A549 (cell line): ENCODE measurements at regions of chr17 and their contacts with region 1.

Region 1: GRCh38 chr17:29777663-29778062 is 152.4 kb downstream of the SSH2 start:
- DNase-seq: no peak
- ATAC-seq: no peak
- H3K4me3 ChIP-seq: no peak overlapping the region
- H3K27ac ChIP-seq: no peak overlapping the region
- H3K4me1 ChIP-seq: no peaks in the 10 kb centered on the region; the same call in 2 of the 3 replicates
- CTCF ChIP-seq: no peak
- EP300 ChIP-seq: no peak
- POLR2A ChIP-seq: no peak
- RAD21 ChIP-seq: no peak

Region 2: DNA sequence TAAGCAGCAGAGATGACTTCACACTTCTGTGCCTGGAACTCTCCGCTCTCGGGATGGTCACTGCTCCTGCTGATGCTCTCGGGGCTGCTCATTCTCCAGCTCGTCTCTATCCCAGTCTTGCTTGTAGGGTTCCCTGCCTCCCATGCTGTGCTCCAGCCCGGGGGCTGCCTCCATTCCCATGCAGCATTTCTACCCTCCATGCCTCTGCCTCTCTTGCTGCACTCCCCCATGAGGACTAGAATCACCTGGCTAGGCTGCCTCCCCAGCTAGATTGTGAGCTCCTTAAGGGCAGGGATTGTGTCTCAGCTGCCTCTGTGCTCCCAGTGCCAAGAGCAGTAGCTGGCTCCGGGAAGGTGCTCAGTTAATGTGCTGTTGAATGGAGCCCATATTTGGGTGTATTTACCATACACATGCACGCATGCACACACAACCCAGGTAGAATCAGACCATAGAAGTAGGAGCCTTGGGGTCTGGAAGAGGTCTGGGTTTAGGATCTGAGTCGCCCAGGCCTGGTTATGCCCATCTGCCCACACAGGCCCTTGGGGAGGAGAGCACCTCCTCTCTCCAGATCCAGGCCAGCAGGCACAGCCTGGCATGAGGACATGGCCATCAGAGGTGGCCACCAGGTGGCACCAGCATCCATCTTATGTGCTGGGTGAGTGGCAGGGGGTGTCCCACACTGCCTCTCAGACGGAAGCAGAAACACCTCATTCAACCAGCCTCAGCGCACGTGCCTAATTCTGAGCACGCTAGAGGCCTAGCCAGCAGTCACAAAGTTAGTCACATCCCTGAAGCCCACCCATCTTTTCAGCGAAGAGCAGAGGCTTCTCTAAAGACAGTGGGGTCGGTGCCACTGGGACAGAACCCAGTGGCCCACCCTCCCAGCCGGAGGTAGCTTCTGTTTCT is 197.5 kb before region 1 on chr17:
- CTCF ChIA-PET with region 1: interaction called, 36 read pairs
- POLR2A ChIA-PET with region 1: no interaction called
- DNase-seq: peak; percentile 91 to 99
- ATAC-seq: peak; percentile 87 to 96
- H3K4me3 ChIP-seq: no peak overlapping the region
- H3K27ac ChIP-seq: peak overlapping the region; percentile 41 to 72; a peak in 5 of 6 replicates
- H3K4me1 ChIP-seq: peaks cover 26% of the 10 kb centered on the region
- CTCF ChIP-seq: peak; percentile 98
- EP300 ChIP-seq: no peak
- POLR2A ChIP-seq: no peak
- RAD21 ChIP-seq: peak; percentile 95

Region 3: GRCh38 chr17:29617125-29617480 is 160.6 kb before region 1 on chr17:
- CTCF ChIA-PET with region 1: interaction called, 111 read pairs
- POLR2A ChIA-PET with region 1: no interaction called
- DNase-seq: peak; percentile 84 to 88
- ATAC-seq: peak; percentile 19 to 67; a peak in 3 of 6 replicates
- H3K4me3 ChIP-seq: peak overlapping the region; percentile 23; the same call in 1 of the 3 replicates
- H3K27ac ChIP-seq: peak overlapping the region in 1 of 2 experiments; percentile 82; a peak in 4 of 6 replicates
- H3K4me1 ChIP-seq: peaks cover 56% of the 10 kb centered on the region
- CTCF ChIP-seq: peak; percentile 58
- EP300 ChIP-seq: no peak
- POLR2A ChIP-seq: peak; percentile 21; the same call in 1 of the 2 replicates
- RAD21 ChIP-seq: peak in 1 of 2 experiments; percentile 23; a peak in 1 of 5 replicates

Region 4: DNA sequence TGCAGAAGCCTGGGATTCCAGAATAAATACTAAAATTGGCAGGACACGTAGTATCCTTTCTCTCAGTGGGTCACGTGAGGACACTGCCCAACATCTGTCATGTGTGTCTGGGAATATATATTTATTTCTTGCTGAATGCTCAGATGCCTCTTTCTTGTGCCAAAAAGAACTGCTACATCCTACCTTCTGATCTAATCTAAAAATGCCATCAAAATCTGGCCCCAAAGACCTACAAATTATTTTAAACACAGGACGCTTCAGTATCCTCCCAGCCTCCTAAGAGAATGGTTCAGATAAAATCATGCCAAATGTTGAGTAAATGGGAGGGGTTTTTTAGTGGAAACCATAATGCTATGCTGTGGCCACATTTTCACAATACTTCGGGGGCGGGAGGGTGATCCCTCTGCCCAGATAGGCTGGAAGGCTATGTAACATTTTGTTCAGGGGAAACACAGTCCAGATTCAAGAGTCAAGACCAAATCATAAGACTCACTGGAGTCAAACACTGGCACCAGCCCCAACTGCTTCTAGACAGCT is 132.1 kb before region 1 on chr17:
- CTCF ChIA-PET with region 1: interaction called, 222 read pairs
- POLR2A ChIA-PET with region 1: no interaction called
- DNase-seq: no peak
- ATAC-seq: no peak
- H3K4me3 ChIP-seq: no peak overlapping the region
- H3K27ac ChIP-seq: no peak overlapping the region
- H3K4me1 ChIP-seq: peaks cover 25% of the 10 kb centered on the region
- CTCF ChIP-seq: no peak
- EP300 ChIP-seq: no peak
- POLR2A ChIP-seq: no peak
- RAD21 ChIP-seq: no peak

Region 5: DNA sequence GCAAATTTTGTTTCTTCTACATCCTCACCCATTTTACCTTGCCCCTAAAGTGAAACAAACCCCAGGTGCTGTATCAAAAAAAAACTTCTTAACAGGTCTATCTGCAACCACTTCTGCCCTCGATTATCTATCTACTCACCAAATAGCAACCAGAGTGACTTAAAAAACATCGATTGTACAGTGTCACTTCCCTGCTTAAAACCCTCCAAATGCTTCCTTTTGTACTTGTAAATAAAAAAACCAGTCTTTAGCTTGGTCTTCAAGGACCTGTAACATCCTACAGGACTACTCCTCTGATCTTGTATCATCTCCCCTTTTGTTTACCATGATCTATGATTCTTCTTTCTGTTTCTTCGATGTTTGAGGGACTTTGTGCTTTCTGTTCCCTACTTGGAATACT is 72.3 kb before region 1 on chr17:
- CTCF ChIA-PET with region 1: interaction called, 13 read pairs
- POLR2A ChIA-PET with region 1: no interaction called
- DNase-seq: no peak
- ATAC-seq: no peak
- H3K4me3 ChIP-seq: no peak overlapping the region
- H3K27ac ChIP-seq: no peak overlapping the region
- H3K4me1 ChIP-seq: peaks cover 24% of the 10 kb centered on the region
- CTCF ChIP-seq: no peak
- EP300 ChIP-seq: no peak
- POLR2A ChIP-seq: no peak
- RAD21 ChIP-seq: no peak

Region 6: DNA sequence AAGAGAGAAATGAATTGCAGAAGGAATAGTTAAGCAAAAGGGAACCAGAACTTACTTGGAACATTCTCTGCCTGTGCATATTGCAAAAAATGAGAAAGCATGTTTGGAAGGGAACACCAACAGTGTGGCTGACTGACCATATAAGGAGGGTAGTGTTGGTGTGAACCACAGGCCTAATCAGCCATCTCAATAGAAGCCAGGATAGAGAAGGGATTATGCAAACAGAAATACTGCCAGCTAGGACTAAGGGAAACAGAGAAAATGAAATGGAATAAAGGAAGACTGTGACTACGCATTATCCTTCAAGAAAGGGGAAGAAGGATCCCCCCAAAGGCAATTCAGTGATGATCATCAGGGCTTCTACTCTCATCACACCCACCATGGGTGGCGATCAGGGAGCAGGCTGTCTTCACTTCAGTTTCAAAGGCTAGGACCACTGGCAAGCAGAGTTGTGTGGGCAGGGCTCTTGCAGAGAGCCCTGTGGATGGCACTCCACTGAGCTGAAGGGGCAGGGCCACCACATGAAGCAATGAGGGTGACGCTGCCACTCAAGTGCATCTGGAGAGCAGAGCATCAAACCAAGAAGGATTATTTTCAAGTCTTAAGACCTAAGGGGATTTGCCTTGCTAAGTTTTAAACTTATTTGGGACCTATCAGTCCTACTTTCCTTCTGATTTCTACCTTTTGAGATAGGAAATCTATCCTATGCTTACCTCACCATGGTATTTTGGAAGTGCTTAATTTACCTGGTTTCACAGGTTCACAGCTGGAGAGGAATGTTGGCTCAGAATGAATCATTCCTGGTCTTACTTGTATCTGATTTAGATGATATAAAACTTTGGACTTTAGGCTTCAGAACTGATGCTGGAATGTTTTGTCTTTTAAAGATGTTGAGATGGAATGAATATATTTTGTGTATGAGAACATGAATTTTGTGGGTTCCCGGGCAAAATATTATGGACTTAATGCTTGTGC is 11.8 kb after region 1 on chr17:
- CTCF ChIA-PET with region 1: interaction called, 16 read pairs
- POLR2A ChIA-PET with region 1: no interaction called
- DNase-seq: no peak
- ATAC-seq: peak in 1 of 2 experiments; percentile 37; a peak in 1 of 6 replicates
- H3K4me3 ChIP-seq: no peak overlapping the region
- H3K27ac ChIP-seq: no peak overlapping the region
- H3K4me1 ChIP-seq: peaks cover 24% of the 10 kb centered on the region
- CTCF ChIP-seq: no peak
- EP300 ChIP-seq: no peak
- POLR2A ChIP-seq: no peak
- RAD21 ChIP-seq: no peak